Dendritic cell treated with granulocyte-macrophage colony-stimulating factor and Interleukin-4, amounts not matched to agents 40 ng/mL and 50 ng/mL, for 4 days (primary cell): ENCODE measurements at regions of chr9 and their contacts with region 1.

Region 1: DNA sequence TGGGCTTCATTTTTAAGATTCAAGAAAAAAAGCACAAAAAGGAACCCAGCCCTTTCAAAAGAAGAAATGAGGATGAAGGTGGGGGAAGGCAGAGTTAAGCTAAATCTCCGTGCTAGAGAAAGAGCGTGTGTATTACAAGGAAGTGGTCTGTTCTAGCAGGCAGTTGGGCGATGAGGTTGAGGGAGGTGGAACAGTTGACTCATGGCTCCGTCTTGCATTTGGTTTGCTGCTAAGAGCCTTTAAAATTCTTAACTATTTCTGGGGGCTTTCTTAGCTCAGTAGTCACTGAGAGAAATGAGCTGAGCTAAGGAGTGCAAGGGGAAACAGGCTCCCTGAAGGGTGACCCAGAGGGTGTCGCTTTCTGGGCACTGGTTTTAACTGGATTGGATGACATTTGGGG is 117.4 kb downstream of the GCNT1 start:
- H3K4me3 Mint-ChIP-seq: no peak overlapping the region
- H3K27ac Mint-ChIP-seq: peak overlapping the region; percentile 90
- H3K4me1 Mint-ChIP-seq: peaks cover 83% of the 10 kb centered on the region
- H3K27me3 Mint-ChIP-seq: no peaks in the 10 kb centered on the region

Region 2: DNA sequence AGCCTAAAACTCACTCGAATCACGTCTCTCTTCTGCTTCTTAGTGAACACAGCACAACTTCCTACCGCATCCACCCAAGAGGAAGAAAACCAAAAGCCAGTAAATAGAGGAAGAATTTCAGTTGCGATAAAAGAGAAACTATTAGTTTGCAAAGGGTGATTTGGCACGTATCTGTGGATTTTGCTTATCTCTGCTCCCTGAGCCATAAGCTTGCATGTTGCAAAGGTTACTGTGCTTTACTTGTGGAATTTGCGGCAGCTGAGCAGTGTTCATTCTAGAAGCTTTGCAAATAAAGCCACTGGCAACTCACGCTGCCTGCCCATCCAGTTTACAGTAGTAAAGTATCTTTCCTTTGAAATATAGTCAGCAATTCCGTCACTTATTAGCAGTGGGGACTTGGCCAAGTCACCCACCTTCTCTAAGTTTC is 38.8 kb after region 1 on chr9:
- intact Hi-C with region 1: loop called (anchors 5 kb)
- H3K4me3 Mint-ChIP-seq: peak overlapping the region; percentile 64
- H3K27ac Mint-ChIP-seq: peak overlapping the region; percentile 83
- H3K4me1 Mint-ChIP-seq: peaks cover 72% of the 10 kb centered on the region
- H3K27me3 Mint-ChIP-seq: no peaks in the 10 kb centered on the region

Region 3: GRCh38 chr9:76651119-76651705 is 74.9 kb after region 1 on chr9:
- intact Hi-C with region 1: loop called (anchors 2 kb)
- H3K4me3 Mint-ChIP-seq: peak overlapping the region; percentile 65
- H3K27ac Mint-ChIP-seq: peak overlapping the region; percentile 87
- H3K4me1 Mint-ChIP-seq: peaks cover 60% of the 10 kb centered on the region
- H3K27me3 Mint-ChIP-seq: no peaks in the 10 kb centered on the region

Region 4: DNA sequence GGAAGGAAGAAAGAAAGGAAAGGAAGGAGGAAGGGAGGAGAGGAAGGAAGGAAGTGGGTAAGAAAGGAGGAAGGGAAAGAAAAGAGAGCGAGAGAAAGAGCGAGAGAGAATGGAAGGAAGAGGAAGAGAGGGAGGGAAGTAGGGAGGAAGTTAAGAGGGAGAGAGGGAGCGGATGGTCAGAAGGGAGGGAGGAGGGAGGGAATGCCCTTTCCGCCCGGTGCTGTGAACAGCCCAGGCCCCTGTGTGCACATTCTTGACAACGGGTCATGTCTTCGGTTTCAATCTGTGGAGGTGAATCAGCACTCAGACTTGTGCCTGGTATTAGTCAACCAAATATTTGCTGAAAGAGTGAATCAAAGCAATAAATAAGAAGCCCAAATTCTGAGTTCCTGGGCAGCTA is 290.3 kb after region 1 on chr9:
- intact Hi-C with region 1: no loop called
- H3K4me3 Mint-ChIP-seq: no peak overlapping the region
- H3K27ac Mint-ChIP-seq: no peak overlapping the region
- H3K4me1 Mint-ChIP-seq: peaks cover 5% of the 10 kb centered on the region
- H3K27me3 Mint-ChIP-seq: peaks cover 3% of the 10 kb centered on the region